Gastrocnemius medialis (tissue), 4 donors: ENCODE measurements at regions of chr2 and their contacts with region 1.

Region 1: GRCh38 chr2:27086090-27086723 is 365 bp upstream of the KHK start:
- DNase-seq: peak; percentile 88 to 93
- ATAC-seq: peak; percentile 84 to 87
- H3K4me3 ChIP-seq: peak overlapping the region; percentile 70 to 95 (median 86)
- H3K27ac ChIP-seq: peak overlapping the region; percentile 88 to 97 (median 94)
- H3K4me1 ChIP-seq: peaks cover 26 to 41% of the 10 kb centered on the region in 2 donors
- H3K27me3 ChIP-seq: no peaks in the 10 kb centered on the region
- CTCF ChIP-seq: peak; percentile 77 to 99 (median 98)
- POLR2A ChIP-seq: peak; percentile 74 to 89

Region 2: GRCh38 chr2:26970244-26970920 is 115.8 kb before region 1 on chr2 and contains the start of gene MAPRE3:
- in situ Hi-C with region 1: loop called in 3 of 4 experiments (anchors 5 to 10 kb)
- intact Hi-C with region 1: no loop called
- DNase-seq: peak; percentile 60 to 78
- ATAC-seq: peak; percentile 73 to 75
- H3K4me3 ChIP-seq: peak within 1 kb of the TSS; percentile 67 to 87 (median 79)
- H3K27ac ChIP-seq: peak within 1 kb of the TSS; percentile 94 to 97 (median 96)
- H3K4me1 ChIP-seq: peaks cover 37 to 41% of the 10 kb centered on the region in 2 donors
- H3K27me3 ChIP-seq: no peaks in the 10 kb centered on the region
- CTCF ChIP-seq: no peak
- POLR2A ChIP-seq: peak; percentile 92
- total RNA-seq, gene MAPRE3: 41.9 to 66.5 (median 53.9) TPM

Region 3: GRCh38 chr2:27050281-27050995 is 35.8 kb before region 1 on chr2:
- in situ Hi-C with region 1: no loop called
- intact Hi-C with region 1: loop called (anchors 1 kb)
- DNase-seq: peak; percentile 81 to 91
- ATAC-seq: peak; percentile 80 to 83
- H3K4me3 ChIP-seq: peak overlapping the region; percentile 78 to 92 (median 84)
- H3K27ac ChIP-seq: peak overlapping the region; percentile 93 to 96 (median 93)
- H3K4me1 ChIP-seq: peaks cover 11 to 13% of the 10 kb centered on the region in 2 donors
- H3K27me3 ChIP-seq: no peaks in the 10 kb centered on the region
- CTCF ChIP-seq: peak; percentile 61 to 73 (median 67)
- POLR2A ChIP-seq: peak in 1 of 2 donors; percentile 9

Region 4: GRCh38 chr2:27211829-27212627 is 125.8 kb after region 1 on chr2 and contains the starts of genes ATRAID and SLC5A6:
- in situ Hi-C with region 1: no loop called
- intact Hi-C with region 1: loop called (anchors 1 kb)
- DNase-seq: peak; percentile 81 to 84
- ATAC-seq: peak; percentile 90 to 92
- H3K4me3 ChIP-seq: peak within 1 kb of the TSS; percentile 83 to 94 (median 87)
- H3K27ac ChIP-seq: peak within 1 kb of the TSS; percentile 94 to 99 (median 98)
- H3K4me1 ChIP-seq: peaks cover 15 to 18% of the 10 kb centered on the region in 2 donors
- H3K27me3 ChIP-seq: no peaks in the 10 kb centered on the region
- CTCF ChIP-seq: no peak
- POLR2A ChIP-seq: peak; percentile 87 to 89
- total RNA-seq, gene ATRAID: 131 to 203 (median 171) TPM
- total RNA-seq, gene SLC5A6: 19.0 to 46.5 (median 32.5) TPM

Region 5: GRCh38 chr2:28080911-28081310 is 994.7 kb after region 1 on chr2:
- in situ Hi-C with region 1: no loop called
- intact Hi-C with region 1: no loop called
- DNase-seq: no peak
- ATAC-seq: peak in 1 of 2 donors; percentile 34
- H3K4me3 ChIP-seq: no peak overlapping the region
- H3K27ac ChIP-seq: peak overlapping the region in 3 of 4 donors; percentile 2 to 35 (median 33)
- H3K4me1 ChIP-seq: peaks cover 9 to 23% of the 10 kb centered on the region in 2 donors
- H3K27me3 ChIP-seq: no peaks in the 10 kb centered on the region
- CTCF ChIP-seq: no peak
- POLR2A ChIP-seq: no peak